Dendritic cell treated with granulocyte-macrophage colony-stimulating factor and Interleukin-4, amounts not matched to agents 40 ng/mL and 50 ng/mL, for 4 days (primary cell): ENCODE measurements at regions of chr9 and their contacts with region 1.

Region 1: GRCh38 chr9:133459476-133460404 is at the start of gene CACFD1:
- H3K4me3 Mint-ChIP-seq: peak within 1 kb of the TSS; percentile 98
- H3K27ac Mint-ChIP-seq: peak within 1 kb of the TSS; percentile 91
- H3K4me1 Mint-ChIP-seq: peaks cover 49% of the 10 kb centered on the region
- H3K27me3 Mint-ChIP-seq: peaks cover 38% of the 10 kb centered on the region

Region 2: DNA sequence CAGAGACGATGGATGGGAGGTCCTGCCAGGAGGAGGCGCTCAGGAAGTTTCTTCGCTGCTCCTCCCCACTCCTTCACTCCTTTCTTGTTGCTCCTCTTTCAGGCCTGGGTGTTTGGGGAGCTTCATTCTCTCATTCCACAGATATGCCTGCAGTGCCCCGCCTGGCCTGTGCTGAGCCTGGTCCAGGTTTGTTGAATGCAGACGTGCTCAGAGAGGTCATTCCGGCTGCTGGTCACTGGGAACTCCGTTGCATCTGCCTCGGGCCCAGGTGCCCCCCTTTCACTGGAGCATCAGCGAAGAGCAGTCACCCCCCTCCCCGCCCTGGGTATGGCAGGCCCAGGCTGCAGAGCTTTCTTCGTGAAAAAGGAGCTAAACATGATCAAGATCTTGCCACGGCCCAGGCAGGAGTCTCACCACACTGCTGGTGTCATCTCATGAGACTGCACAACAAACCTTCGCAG is 139.3 kb before region 1 on chr9:
- intact Hi-C with region 1: no loop called
- H3K4me3 Mint-ChIP-seq: no peak overlapping the region
- H3K27ac Mint-ChIP-seq: no peak overlapping the region
- H3K4me1 Mint-ChIP-seq: peaks cover 6% of the 10 kb centered on the region
- H3K27me3 Mint-ChIP-seq: peaks cover 7% of the 10 kb centered on the region

Region 3: GRCh38 chr9:133421615-133422542 is 37.9 kb before region 1 on chr9 and contains the start of gene ADAMTS13:
- intact Hi-C with region 1: loop called (anchors 5 kb)
- H3K4me3 Mint-ChIP-seq: no peak within 1 kb of the TSS
- H3K27ac Mint-ChIP-seq: no peak within 1 kb of the TSS
- H3K4me1 Mint-ChIP-seq: peaks cover 16% of the 10 kb centered on the region
- H3K27me3 Mint-ChIP-seq: peaks cover 16% of the 10 kb centered on the region

Region 4: GRCh38 chr9:133478851-133479711 is 19.3 kb after region 1 on chr9 and contains the start of gene SLC2A6:
- intact Hi-C with region 1: loop called (anchors 2 kb)
- H3K4me3 Mint-ChIP-seq: peak within 1 kb of the TSS; percentile 86
- H3K27ac Mint-ChIP-seq: peak within 1 kb of the TSS; percentile 79
- H3K4me1 Mint-ChIP-seq: peaks cover 49% of the 10 kb centered on the region
- H3K27me3 Mint-ChIP-seq: peaks cover 39% of the 10 kb centered on the region